Heart right ventricle (tissue), 16 donors: ENCODE measurements at regions of chr1 and their contacts with region 1.

Region 1: GRCh38 chr1:220089650-220090556 is at the start of gene BPNT1:
- DNase-seq: peak; percentile 92 to 96
- ATAC-seq: peak; percentile 82 to 92 (median 86)
- H3K4me3 ChIP-seq: peak within 1 kb of the TSS; percentile 28 to 81 (median 67)
- H3K27ac ChIP-seq: peak within 1 kb of the TSS in 8 of 10 donors; percentile 32 to 84 (median 54)
- H3K4me1 ChIP-seq: peaks cover 0 to 26% (median 10%) of the 10 kb centered on the region in 9 donors
- H3K27me3 ChIP-seq: no peaks in the 10 kb centered on the region
- CTCF ChIP-seq: no peak
- total RNA-seq, gene BPNT1: 13.8 to 21.0 (median 19.2) TPM

Region 2: DNA sequence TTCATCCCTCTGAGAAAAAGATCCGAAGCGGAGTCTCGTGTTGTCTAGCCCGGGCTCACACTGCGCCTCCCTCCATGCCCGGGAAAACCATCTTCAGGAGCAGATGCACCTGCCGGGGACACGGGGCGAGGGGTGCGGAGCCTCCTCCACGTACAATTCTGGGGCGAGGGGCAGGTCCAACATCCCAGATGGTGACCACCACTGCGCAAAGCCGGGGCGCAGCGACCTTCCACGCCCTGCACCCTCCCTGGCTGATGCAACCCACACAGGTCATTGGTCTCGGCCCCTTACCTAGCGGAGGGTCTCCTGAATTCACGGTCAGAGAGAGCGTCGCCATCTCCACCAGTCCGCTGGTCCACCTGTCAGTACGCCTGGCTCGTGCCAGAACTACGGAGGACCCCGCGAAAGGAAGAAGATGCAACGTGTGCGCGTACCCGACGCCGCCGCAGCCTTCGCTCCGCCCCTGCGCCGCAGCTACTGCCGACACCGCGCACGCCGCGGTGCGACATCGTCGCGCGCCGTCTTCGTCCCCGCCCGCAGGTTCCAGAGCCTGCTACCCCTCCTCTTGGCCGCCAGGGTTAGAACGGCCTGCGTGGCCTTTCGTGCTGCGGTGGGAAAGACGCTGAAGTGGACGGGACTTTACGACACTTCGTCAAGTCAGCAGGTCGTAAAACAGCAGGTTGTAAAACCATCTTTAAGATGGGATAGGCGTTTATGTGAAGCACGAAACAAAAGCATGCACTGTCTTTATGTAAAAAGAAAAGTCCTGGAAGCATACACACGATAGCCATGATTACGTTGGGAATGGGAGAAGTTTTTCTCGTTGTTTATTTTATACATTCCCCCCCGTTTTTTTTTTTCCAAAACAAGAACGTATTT is 43.6 kb before region 1 on chr1 and contains the start of gene EPRS1:
- intact Hi-C with region 1: loop called in 2 of 10 experiments (anchors 5 kb)
- DNase-seq: peak; percentile 93 to 95
- ATAC-seq: peak; percentile 99 to 100 (median 99)
- H3K4me3 ChIP-seq: peak within 1 kb of the TSS; percentile 63 to 98 (median 78)
- H3K27ac ChIP-seq: peak within 1 kb of the TSS; percentile 47 to 89 (median 82)
- H3K4me1 ChIP-seq: peaks cover 0 to 33% (median 16%) of the 10 kb centered on the region in 9 donors
- H3K27me3 ChIP-seq: no peaks in the 10 kb centered on the region
- CTCF ChIP-seq: peak; percentile 59 to 88 (median 80)
- total RNA-seq, gene EPRS1: 66.0 to 96.7 (median 73.3) TPM